ENCODE measurements at regions of chr20 and their contacts with region 1.

Region 1: GRCh38 chr20:59605165-59606042 is 1.1 kb downstream of the PHACTR3 start:
- DNase-seq: no peak
- ATAC-seq: peak; percentile 35

Region 2: DNA sequence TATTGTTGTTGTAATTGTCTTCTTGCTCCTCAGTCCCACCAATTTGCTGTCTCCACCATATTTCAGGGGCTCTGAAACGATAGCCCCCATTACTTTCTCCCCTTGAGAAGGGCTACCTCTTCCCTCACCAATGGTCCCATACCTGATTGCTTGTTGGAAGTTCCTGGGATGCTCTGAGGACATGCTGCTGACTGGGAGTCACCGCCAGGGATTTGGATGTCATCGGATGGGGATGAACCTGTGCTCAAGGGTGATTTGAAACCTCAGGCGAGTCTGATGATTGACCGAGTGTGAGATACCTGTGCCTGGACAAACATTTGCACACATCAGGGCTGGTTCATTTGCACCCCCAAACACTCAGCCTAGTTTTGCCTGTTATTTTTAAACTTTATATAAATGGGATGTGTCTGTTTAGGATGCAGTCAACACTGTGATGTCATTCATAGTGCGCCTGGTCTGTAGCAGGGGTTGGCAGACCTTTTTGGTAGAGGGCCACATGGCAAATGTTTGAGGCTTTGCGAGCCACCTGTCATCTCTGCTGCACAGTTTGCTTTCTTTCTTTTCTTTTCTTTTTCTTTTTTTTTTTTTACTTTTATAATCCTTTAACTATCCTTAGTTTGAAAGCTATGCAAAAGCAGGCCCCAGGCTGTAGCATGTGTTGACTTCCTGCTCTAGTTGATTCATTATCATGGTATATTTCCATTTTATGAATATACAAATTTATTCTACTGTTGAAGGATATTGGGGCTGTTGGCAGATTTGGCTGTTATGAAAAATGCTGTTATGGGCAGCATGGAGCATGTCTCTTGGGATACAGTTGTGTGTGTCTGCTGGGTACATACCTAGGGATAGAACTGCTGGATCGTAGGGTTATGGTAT is 119.6 kb before region 1 on chr20:
- intact Hi-C with region 1: no loop called
- DNase-seq: no peak
- ATAC-seq: no peak

Region 3: GRCh38 chr20:59643615-59644061 is 38.2 kb after region 1 on chr20:
- intact Hi-C with region 1: loop called (anchors 5 kb)
- DNase-seq: no peak
- ATAC-seq: peak; percentile 39

Region 4: GRCh38 chr20:59692173-59692572 is 86.8 kb after region 1 on chr20:
- intact Hi-C with region 1: loop called (anchors 5 kb)
- DNase-seq: no peak
- ATAC-seq: peak; percentile 84

Measured in Right ventricle myocardium inferior (tissue), 1 donor.